Ascending aorta (tissue), 2 donors: ENCODE measurements at regions of chr13 and their contacts with region 1.

Region 1: DNA sequence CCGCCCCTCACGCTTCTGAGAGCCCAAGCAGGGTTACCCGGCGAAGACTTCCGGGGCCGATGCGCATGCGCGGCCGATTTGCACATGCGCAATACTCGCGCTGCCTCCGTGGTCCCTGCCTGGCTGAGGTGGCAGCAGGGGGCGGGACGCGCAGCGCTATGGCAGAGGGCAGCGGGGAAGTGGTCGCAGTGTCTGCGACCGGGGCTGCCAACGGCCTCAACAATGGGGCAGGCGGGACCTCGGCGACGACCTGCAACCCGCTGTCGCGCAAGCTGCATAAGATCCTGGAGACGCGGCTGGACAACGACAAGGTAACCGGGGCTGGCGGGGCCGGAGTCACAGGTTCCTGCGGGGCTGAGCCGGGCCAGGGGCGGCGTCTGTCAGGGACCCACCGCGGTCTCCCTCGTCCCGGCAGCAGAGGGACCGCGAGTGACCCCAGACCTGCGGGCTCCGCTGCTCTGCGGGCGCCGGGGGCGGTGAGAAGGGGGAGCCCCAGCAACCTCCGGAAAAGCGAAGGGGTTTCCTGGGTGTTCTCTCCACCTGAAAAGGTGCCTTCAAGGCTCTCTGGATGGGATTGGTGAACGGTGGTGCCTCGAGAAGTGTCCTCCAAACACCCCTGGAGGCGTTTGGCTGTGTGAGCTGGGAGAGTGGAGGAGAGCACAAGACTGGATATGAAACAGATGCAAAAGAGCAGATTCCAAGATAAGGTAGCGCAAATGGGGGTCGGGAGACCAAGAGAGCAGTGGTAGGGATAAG is at the start of gene COG6:
- DNase-seq: peak; percentile 61 to 96
- H3K4me3 ChIP-seq: peak within 1 kb of the TSS; percentile 69 to 93
- H3K27ac ChIP-seq: peak within 1 kb of the TSS; percentile 61 to 81
- H3K4me1 ChIP-seq: peaks cover 0 to 3% of the 10 kb centered on the region in 2 donors
- H3K27me3 ChIP-seq: no peaks in the 10 kb centered on the region
- CTCF ChIP-seq: peak in 1 of 3 experiments; percentile 23
- total RNA-seq, gene COG6: 8.6 TPM

Region 2: DNA sequence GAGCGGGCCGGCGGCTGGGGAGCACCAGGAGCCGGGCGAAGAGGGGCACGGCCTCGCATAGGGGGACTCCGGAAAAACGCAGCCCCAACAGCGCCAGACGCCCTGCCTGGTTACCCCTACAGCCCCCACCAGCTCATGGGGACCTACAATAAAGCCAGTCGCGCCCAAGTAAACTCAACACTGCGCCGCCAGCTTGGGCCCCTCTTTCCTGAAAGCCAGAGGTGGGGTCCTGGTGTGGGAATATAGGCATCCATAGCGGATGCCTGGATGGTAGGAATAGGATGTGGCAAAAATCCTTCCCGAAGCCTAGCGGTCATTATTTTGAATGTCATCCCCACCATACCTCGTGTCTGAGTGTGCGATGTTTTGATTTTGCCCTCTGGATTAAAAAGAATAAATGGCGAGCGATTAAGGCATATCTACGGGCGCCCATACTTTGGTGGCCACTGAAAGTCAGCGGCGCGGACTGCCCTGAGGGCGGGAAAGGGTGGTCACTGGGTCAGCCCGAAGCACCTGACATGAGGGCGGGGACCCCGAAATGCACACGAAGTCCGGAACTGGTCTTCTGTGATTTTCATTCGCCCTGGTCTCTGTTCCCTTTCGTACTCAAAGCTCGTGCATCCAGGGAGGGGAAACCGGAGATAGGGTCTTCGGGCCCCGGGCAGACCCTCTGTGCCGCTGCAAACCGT is 617.7 kb before region 1 on chr13 and contains the starts of genes NHLRC3 and PROSER1:
- intact Hi-C with region 1: loop called (anchors 2 kb)
- DNase-seq: peak; percentile 76 to 97
- H3K4me3 ChIP-seq: peak within 1 kb of the TSS; percentile 97 to 100
- H3K27ac ChIP-seq: peak within 1 kb of the TSS; percentile 78 to 88
- H3K4me1 ChIP-seq: peaks cover 0 to 16% of the 10 kb centered on the region in 2 donors
- H3K27me3 ChIP-seq: no peaks in the 10 kb centered on the region
- CTCF ChIP-seq: no peak
- total RNA-seq, gene NHLRC3: 7.1 TPM
- total RNA-seq, gene PROSER1: 60.7 TPM